ENCODE measurements at regions of chr14 and their contacts with region 1.

Region 1: DNA sequence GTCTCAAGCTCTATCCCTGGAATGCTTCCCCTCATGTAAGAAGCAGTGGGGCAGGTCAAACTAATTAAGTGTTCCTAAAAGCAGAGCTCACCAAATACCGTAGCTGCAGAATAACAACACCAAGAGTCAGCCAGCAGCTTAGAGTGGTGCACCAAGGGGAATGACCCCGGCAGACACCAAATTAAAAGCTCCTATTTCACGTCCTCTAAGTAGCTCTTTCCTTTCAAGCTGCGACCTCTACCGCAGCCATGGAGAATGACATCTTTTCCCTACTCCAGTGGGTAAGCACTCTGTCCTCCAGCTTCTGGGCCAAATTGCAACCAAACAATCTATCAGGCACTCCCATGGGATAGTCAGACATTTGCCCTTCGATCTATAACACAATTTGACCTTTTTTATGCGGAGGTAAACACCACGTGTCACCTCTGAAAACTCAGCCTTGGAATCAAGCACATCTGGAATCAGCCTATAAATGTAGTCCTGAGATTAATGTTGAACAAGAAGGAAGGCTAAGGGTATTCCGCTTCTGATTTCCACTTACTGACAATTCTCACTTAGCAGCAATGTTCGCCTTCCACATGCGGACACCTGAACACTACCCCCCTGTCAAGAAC is 67.6 kb upstream of the CDKN3 start:
- DNase-seq: peak; percentile 78

Region 2: DNA sequence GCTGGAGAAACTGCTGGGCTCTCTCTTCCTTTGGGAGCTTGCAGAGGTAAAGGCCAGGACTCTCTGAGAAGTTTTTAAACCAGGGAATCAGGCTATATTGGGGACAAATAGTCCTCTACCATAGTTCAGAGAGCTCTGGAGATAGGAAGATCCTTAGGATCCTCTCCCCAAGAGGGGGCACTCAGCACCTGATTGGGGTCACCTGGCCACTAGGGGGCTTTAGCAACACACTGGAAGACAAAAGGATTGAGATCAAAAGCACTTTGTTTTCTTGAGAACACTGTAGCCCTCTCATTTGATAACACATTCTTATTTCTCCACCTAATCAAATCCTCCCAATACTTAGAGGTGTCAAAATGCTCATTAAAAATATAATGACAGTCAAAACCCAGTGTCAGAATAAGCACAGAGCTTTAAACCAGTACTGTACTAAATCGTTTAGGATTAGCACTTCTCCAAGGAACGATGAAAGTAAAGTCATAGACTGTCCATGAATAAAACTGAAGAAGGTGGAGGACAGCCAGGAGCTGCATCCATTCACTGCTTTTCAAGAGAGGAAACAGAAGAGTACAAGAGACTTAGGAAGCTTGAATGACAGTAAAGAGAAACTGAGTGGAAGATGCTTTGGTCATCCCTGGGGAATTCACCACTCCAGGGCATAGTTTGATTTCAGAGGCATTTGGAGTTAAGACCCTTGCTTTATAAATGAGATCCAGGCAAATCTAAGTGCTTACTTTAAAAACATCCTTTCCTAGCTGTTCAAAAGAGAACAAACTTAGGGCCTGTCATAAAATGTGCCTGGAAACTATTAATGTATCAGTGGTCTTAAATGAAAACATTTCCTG is 399.1 kb before region 1 on chr14:
- in situ Hi-C with region 1: loop called (anchors 25 kb)
- DNase-seq: peak; percentile 56

Region 3: DNA sequence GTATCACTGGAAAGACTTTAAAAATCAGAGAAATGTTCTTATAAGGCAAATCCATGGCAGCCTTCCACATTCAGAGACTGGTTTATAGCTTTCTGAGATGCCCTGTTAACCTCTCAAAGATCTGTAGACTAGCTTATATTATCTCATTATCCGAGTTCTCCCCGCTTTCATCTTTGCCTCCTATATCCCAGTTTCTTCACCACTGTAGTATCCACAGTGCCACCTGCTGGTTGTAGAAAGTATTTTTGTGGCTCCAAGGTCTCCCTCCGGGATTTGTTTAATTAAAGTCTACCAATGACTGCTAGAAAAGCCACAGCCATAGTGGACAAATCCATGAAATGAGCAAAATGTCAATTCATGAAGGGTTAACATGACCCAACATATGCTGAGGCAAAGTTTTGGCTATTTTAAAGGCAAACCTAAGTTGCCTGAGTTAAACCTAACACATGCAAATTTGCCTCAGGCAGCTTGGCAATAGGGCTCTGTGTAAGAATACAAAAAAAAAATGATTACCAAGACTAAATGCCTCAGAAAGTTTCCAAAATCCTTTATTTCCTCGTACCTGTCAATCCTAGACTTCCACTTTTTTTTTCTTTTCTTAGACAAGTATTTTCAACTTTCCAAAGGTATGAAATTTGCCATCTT is 153.8 kb before region 1 on chr14:
- in situ Hi-C with region 1: loop called (anchors 25 kb)
- DNase-seq: peak; percentile 81

Measured in G401 (cell line).